ENCODE measurements at regions of chr7 and their contacts with region 1.

Region 1: DNA sequence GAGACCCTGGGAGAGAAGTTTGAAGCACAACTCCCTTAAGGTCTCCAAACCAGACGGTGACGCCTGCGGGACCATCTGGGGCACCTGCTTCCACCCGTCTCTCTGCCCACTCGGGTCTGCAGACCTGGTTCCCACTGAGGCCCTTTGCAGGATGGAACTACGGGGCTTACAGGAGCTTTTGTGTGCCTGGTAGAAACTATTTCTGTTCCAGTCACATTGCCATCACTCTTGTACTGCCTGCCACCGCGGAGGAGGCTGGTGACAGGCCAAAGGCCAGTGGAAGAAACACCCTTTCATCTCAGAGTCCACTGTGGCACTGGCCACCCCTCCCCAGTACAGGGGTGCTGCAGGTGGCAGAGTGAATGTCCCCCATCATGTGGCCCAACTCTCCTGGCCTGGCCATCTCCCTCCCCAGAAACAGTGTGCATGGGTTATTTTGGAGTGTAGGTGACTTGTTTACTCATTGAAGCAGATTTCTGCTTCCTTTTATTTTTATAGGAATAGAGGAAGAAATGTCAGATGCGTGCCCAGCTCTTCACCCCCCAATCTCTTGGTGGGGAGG is 10.8 kb downstream of the SERPINE1 start:
- DNase-seq: no peak
- ATAC-seq: peak in 1 of 4 donors; percentile 19
- H3K4me3 ChIP-seq: peak overlapping the region; percentile 28
- H3K27ac ChIP-seq: peak overlapping the region; percentile 65
- H3K4me1 ChIP-seq: peaks cover 15% of the 10 kb centered on the region
- H3K27me3 ChIP-seq: peaks cover 0 to 18% (median 2%) of the 10 kb centered on the region in 3 donors
- CTCF ChIP-seq: no peak

Region 2: DNA sequence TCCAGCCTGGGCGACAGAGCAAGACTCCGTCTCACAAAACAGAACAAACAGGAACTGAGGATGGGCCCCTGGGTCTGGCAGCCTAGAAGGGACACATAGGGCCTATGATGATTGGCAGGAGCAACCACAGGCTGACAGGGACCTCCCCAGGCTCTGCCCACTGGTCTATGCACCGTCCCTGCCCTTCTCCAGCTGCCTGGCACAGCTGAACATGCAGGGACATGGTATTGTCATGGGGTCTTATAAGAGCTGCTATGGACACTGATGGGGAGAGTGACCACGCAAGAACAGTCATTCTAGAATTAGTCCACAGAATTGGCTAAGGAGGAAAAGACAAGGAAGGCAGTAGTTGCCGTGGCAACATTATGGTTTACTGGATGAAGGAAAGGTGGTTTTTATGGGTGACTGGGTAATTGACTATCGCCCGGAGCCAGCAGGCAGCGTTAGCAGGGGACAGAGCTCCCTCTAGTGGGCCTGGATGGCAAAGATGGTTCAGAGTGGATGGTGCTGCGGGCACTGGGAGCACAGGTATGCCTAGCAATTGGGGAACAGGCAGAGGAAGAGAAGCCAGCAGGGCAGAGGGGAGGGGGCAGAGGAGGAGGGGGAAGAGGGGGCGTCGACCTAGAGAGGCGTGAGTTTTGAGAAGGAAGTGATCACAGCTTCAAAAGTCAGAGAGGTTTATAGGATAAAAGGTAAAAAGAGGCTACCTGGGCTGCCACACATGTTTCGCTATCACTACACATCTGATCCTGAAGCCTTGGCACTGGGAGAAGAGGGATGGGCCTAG is 60.2 kb before region 1 on chr7:
- intact Hi-C with region 1: no loop called
- DNase-seq: peak; percentile 70 to 77
- ATAC-seq: peak; percentile 72 to 91 (median 84)
- H3K4me3 ChIP-seq: no peak overlapping the region
- H3K27ac ChIP-seq: no peak overlapping the region
- H3K4me1 ChIP-seq: no peaks in the 10 kb centered on the region
- H3K27me3 ChIP-seq: no peaks in the 10 kb centered on the region
- CTCF ChIP-seq: peak; percentile 73

Region 3: GRCh38 chr7:101094416-101095375 is 43.0 kb before region 1 on chr7:
- intact Hi-C with region 1: loop called in 1 of 2 experiments (anchors 2 kb)
- DNase-seq: peak; percentile 63 to 68
- ATAC-seq: peak; percentile 65 to 80 (median 74)
- H3K4me3 ChIP-seq: no peak overlapping the region
- H3K27ac ChIP-seq: no peak overlapping the region
- H3K4me1 ChIP-seq: peaks cover 14% of the 10 kb centered on the region
- H3K27me3 ChIP-seq: no peaks in the 10 kb centered on the region
- CTCF ChIP-seq: peak; percentile 53

Region 4: GRCh38 chr7:101185258-101185839 is 47.6 kb after region 1 on chr7:
- intact Hi-C with region 1: loop called in 1 of 2 experiments (anchors 5 kb)
- DNase-seq: no peak
- ATAC-seq: no peak
- H3K4me3 ChIP-seq: no peak overlapping the region
- H3K27ac ChIP-seq: no peak overlapping the region
- H3K4me1 ChIP-seq: no peaks in the 10 kb centered on the region
- H3K27me3 ChIP-seq: peaks cover 0 to 54% (median under 1%) of the 10 kb centered on the region in 3 donors
- CTCF ChIP-seq: no peak

Region 5: DNA sequence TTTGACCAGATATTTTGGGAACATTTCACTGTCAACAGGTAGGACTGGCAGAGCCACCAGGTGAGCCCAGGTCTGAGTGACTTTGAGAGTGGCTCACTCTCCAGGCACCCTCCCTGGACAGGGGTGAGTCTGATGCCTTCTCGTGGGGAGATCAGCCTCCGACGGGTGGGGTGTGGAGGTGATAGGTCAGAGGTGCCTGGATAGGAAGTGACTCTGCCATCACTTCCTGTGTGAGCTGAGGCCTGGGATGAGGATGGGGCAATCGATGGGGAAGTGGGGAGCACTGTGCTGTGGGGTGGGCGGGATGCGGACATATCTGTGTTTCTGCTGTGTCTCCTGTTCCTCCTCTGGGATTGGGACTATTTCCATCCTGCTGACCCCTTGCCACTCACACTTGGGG is 149.3 kb after region 1 on chr7:
- intact Hi-C with region 1: loop called in 1 of 2 experiments (anchors 5 kb)
- DNase-seq: no peak
- ATAC-seq: no peak
- H3K4me3 ChIP-seq: no peak overlapping the region
- H3K27ac ChIP-seq: no peak overlapping the region
- H3K4me1 ChIP-seq: no peaks in the 10 kb centered on the region
- H3K27me3 ChIP-seq: peaks cover 0 to 15% (median 4%) of the 10 kb centered on the region in 3 donors
- CTCF ChIP-seq: no peak

Measured in psoas muscle (tissue), 8 donors.